ENCODE measurements at regions of chr7 and their contacts with region 1.

Region 1: GRCh38 chr7:73702226-73702625 is 17.2 kb downstream of the STX1A start:
- DNase-seq: no peak
- ATAC-seq: no peak
- H3K4me3 ChIP-seq: no peak overlapping the region
- H3K4me3 Mint-ChIP-seq: peak overlapping the region in 1 of 3 donors; percentile 22
- H3K27ac ChIP-seq: no peak overlapping the region
- H3K27ac Mint-ChIP-seq: no peak overlapping the region
- H3K4me1 ChIP-seq: peaks cover 0 to 16% of the 10 kb centered on the region in 2 experiments
- H3K4me1 Mint-ChIP-seq: peaks cover 3 to 11% (median 10%) of the 10 kb centered on the region in 3 donors
- H3K27me3 ChIP-seq: no peaks in the 10 kb centered on the region
- H3K27me3 Mint-ChIP-seq: no peaks in the 10 kb centered on the region

Region 2: GRCh38 chr7:73683056-73683964 is 18.9 kb before region 1 on chr7 and contains the starts of genes BUD23 and DNAJC30:
- CTCF ChIA-PET with region 1: interaction called in 1 of 2 experiments, 11 read pairs
- POLR2A ChIA-PET with region 1: interaction called in 1 of 2 experiments, 3 read pairs
- DNase-seq: peak; percentile 85 to 99 (median 96)
- ATAC-seq: peak; percentile 97 to 98 (median 98)
- H3K4me3 ChIP-seq: peak within 1 kb of the TSS; percentile 68 to 98
- H3K4me3 Mint-ChIP-seq: peak within 1 kb of the TSS; percentile 94 to 99 (median 96)
- H3K27ac ChIP-seq: peak within 1 kb of the TSS; percentile 87
- H3K27ac Mint-ChIP-seq: peak within 1 kb of the TSS; percentile 90 to 94
- H3K4me1 ChIP-seq: peaks cover 13 to 45% of the 10 kb centered on the region in 2 experiments
- H3K4me1 Mint-ChIP-seq: peaks cover 28 to 47% (median 45%) of the 10 kb centered on the region in 3 donors
- H3K27me3 ChIP-seq: no peaks in the 10 kb centered on the region
- H3K27me3 Mint-ChIP-seq: no peaks in the 10 kb centered on the region
- total RNA-seq, gene BUD23: 66.9 to 90.0 (median 71.2) TPM
- total RNA-seq, gene DNAJC30: 9.1 to 16.4 (median 14.7) TPM

Measured in T-cell (primary cell).